AG04450 (cell line): ENCODE measurements at regions of chr1 and their contacts with region 1.

Region 1: GRCh38 chr1:45443580-45444461 is 47.1 kb downstream of the TESK2 start:
- DNase-seq: no peak
- H3K4me3 ChIP-seq: no peak overlapping the region
- H3K27ac ChIP-seq: no peak overlapping the region
- H3K27me3 ChIP-seq: no peaks in the 10 kb centered on the region
- CTCF ChIP-seq: no peak

Region 2: DNA sequence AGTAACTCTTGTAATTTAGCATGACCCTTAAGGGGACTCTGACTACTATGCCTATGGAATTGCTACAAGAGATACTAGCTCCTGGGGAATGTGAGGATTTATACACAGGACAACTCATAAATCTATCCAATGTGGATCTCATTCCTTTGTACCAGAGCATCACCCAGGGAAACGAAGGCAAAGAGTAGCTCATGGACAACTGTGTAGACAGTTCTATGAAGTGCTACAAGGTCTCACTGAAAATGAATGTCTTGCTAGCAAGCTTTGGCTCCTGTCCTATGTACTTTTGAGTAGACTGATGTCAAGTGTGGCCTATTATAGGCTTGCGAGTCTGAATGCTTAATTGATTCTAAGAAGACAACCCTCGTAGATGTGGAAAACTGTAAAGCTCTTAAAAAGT is 331.2 kb before region 1 on chr1:
- CTCF ChIA-PET with region 1: no interaction called
- POLR2A ChIA-PET with region 1: no interaction called
- DNase-seq: no peak
- H3K4me3 ChIP-seq: no peak overlapping the region
- H3K27ac ChIP-seq: no peak overlapping the region
- H3K27me3 ChIP-seq: peaks cover 3% of the 10 kb centered on the region
- CTCF ChIP-seq: no peak

Region 3: GRCh38 chr1:45456531-45456930 is 12.7 kb after region 1 on chr1:
- CTCF ChIA-PET with region 1: no interaction called
- POLR2A ChIA-PET with region 1: interaction called, 13 read pairs
- DNase-seq: no peak
- H3K4me3 ChIP-seq: no peak overlapping the region
- H3K27ac ChIP-seq: no peak overlapping the region
- H3K27me3 ChIP-seq: no peaks in the 10 kb centered on the region
- CTCF ChIP-seq: no peak